AG04449 (cell line): ENCODE measurements at regions of chr20 and their contacts with region 1.

Region 1: DNA sequence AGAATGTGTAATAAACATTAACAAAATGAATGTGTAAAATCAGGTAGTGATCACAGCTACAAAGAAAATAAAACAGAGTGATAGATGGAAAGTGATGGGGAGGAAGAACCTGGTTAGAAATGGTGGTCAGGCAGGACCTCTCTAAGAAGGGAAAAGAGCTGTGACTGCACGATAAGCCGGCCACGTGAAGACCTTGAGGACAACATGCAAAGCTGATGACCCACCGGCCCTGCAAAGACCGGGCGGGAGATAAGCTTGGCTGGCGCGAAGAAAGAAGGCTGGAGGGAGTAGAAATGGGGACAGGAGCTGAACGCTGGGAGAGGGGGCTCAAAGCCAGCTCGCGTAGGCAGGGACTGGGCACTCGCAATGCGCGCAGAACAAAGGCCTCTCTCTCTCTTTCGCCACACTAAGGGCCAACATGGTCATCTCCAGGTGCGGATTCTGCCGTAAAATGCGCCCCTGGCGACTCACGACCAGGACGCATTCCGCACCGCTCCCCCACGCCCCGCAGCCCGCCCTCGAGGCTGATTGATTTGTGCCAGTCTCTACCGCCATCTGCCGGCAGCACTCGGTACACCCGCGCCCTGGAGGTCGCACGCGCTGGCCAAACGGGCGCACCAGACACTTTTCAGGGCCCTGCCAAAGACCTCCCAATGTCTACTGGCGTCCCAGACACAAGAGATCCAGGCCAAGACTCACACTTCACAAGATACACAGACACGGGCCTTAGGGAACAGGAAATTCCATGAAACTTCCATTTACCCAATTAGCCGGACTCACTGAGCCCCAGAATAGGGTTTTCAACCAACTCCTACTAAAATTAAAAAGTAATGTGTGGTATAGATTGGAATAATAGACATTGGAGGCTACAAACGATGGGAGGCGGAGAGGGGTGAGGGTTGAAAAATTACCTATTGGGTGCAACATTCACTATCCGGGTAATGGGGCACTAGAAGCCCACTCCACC is 9.4 kb downstream of the DEFB132 start:
- DNase-seq: no peak
- H3K4me3 ChIP-seq: peak overlapping the region; percentile 67
- CTCF ChIP-seq: peak; percentile 99

Region 2: GRCh38 chr20:278607-279571 is 12.0 kb after region 1 on chr20:
- CTCF ChIA-PET with region 1: interaction called, 46 read pairs
- POLR2A ChIA-PET with region 1: no interaction called
- DNase-seq: no peak
- H3K4me3 ChIP-seq: no peak overlapping the region
- CTCF ChIP-seq: no peak

Region 3: DNA sequence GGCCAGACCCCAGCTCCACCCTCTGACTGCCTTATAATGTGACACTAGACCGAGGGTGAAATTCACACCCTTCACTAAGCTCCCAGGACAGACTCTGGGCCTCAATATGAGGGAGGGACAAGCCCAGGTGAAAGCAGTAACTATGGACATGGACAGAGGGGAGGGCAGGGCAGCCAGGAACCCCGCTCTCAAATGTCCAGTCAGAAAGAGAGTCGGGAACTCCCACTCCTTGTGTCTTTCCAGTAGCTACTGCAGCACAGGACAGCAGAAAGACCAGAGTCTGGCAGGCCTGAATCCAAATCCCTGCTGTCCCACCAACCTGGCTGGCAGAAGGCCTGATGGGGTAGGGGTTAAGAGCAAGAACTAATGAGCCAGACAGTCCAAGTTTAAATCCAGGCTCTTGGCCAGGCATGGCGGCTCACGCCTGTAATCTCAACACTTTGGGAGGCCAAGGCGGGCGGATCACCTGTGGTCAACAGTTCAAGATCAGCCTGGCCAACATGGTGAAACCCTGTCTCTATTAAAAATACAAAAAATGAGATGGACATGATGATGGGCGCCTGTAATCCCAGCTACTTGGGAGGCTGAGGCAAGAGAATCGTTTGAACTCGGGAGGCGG is 17.4 kb after region 1 on chr20:
- CTCF ChIA-PET with region 1: interaction called, 46 read pairs
- POLR2A ChIA-PET with region 1: no interaction called
- DNase-seq: no peak
- H3K4me3 ChIP-seq: no peak overlapping the region
- CTCF ChIP-seq: no peak

Region 4: GRCh38 chr20:362271-363254 is 95.7 kb after region 1 on chr20:
- CTCF ChIA-PET with region 1: no interaction called
- POLR2A ChIA-PET with region 1: no interaction called
- DNase-seq: no peak
- H3K4me3 ChIP-seq: no peak overlapping the region
- CTCF ChIP-seq: peak; percentile 42

Region 5: DNA sequence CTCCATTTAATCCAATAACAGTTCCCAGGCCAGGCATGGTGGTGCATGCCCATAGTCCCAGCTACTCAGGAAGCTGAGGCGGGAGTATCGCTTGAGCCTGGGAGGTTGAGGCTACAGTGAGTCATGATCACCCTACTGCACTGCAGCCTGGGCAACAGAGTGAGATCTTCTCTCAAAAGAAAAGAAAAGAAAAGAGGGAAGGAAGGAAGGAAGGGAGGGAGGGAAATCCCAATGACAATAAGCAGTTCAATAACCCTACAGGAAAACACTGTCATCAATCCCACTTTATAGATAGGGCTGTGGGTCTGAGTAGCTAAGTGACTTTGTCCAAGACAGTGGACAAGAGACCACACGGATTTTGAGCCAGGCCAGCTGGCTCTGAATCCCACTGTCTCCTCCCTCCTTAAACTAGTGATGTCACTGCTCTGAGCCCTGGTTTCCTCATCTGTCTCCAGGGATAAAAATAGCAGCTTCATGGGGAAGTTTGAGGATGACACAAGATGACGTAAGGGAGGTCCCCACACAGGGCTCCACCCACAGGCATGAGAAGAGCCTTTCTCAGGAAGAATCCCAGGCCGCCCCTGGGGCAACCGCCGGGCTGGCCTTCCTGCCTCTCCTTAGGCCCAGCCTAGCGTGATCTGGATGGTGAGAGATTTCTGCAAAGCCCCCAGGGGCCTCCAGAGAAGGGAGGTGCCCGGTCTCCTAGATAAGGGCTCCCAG is 106.5 kb after region 1 on chr20:
- CTCF ChIA-PET with region 1: no interaction called
- POLR2A ChIA-PET with region 1: no interaction called
- DNase-seq: no peak
- H3K4me3 ChIP-seq: no peak overlapping the region
- CTCF ChIP-seq: no peak